Panc1 (cell line): ENCODE measurements at regions of chr12 and their contacts with region 1.

Region 1: DNA sequence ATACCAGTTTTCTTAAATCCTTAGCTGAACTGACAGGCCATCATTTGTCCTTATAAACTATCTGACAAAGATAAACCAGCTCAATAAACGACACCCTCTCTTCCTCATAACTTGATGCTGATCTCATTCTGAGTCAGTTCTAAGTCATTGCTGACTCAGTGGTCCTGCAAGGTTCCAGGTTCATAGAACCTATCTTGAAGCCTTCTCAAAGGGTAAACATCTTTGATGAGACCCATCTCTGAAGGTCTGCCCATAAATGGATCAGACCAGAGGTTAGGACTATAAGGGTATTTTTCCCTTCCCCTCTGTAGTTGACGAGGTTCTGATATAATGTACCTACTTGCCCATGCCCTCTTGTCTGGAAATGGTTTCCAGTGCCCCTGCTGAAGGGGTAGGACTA is 11.9 kb downstream of the NAA25 start:
- DNase-seq: peak; percentile 76
- ATAC-seq: peak; percentile 86
- H3K4me3 ChIP-seq: no peak overlapping the region
- H3K27ac ChIP-seq: peak overlapping the region; percentile 24; the same call in 1 of the 2 replicates
- H3K4me1 ChIP-seq: peaks cover 8% of the 10 kb centered on the region; the same call in 1 of the 2 replicates
- H3K27me3 ChIP-seq: no peaks in the 10 kb centered on the region
- CTCF ChIP-seq: no peak

Region 2: GRCh38 chr12:112018571-112019237 is 78.0 kb before region 1 on chr12:
- CTCF ChIA-PET with region 1: no interaction called
- POLR2A ChIA-PET with region 1: interaction called, 13 read pairs
- in situ Hi-C with region 1: no loop called
- intact Hi-C with region 1: no loop called
- DNase-seq: no peak
- ATAC-seq: no peak
- H3K4me3 ChIP-seq: no peak overlapping the region
- H3K27ac ChIP-seq: no peak overlapping the region
- H3K4me1 ChIP-seq: peaks cover 13% of the 10 kb centered on the region
- H3K27me3 ChIP-seq: no peaks in the 10 kb centered on the region
- CTCF ChIP-seq: no peak

Region 3: DNA sequence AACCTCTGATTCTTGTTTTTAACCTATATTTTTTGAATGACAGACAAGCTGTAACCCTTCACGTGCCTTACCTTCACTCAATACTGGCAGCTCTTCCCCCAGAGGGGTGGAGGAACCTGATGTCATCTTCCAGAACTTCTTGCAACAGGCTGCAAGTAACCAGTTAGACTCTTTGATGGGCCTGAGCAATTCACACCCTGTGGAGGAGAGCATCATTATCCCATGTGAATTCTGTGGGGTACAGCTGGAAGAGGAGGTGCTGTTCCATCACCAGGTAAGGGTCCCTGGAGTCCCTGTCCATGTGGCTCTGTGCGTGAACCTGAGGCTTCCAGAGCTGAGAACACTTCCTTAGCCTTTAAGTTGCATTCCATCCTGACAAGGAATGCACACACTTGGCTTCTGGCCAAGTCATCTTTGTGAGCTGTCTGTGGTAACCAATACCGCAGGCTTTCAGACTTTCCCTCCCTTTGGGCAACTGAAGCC is 51.4 kb after region 1 on chr12:
- CTCF ChIA-PET with region 1: no interaction called
- POLR2A ChIA-PET with region 1: interaction called, 11 read pairs
- in situ Hi-C with region 1: no loop called
- intact Hi-C with region 1: no loop called
- DNase-seq: no peak
- ATAC-seq: no peak; the same call in 1 of the 2 replicates
- H3K4me3 ChIP-seq: no peak overlapping the region
- H3K27ac ChIP-seq: no peak overlapping the region
- H3K4me1 ChIP-seq: no peaks in the 10 kb centered on the region
- H3K27me3 ChIP-seq: no peaks in the 10 kb centered on the region
- CTCF ChIP-seq: no peak